MCF 10A (cell line): ENCODE measurements at regions of chr5 and their contacts with region 1.

Region 1: DNA sequence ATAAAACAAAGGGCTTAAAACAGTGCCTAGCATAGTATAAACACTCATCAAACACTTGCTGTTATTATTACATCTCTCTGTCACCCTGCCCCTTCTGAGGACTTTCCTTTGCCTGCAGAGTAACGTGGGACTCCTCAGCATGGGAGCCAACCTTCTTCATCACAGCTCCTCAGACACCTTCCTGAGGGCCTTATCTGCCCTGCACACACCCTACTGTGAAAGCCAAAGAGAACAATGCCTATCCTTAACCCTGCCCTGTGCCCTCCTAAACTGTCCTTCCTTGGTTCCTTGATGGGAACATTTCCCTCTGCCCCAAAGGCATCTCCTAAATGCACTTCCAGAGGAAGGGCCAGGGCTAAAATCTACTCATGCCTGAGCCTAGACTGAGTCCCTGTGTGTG is 20.6 kb upstream of the HAND1 start:
- DNase-seq: no peak
- H3K4me3 Mint-ChIP-seq: no peak overlapping the region
- H3K27ac Mint-ChIP-seq: no peak overlapping the region
- H3K4me1 Mint-ChIP-seq: no peaks in the 10 kb centered on the region
- H3K27me3 Mint-ChIP-seq: peaks cover 46% of the 10 kb centered on the region
- CTCF ChIP-seq: no peak

Region 2: DNA sequence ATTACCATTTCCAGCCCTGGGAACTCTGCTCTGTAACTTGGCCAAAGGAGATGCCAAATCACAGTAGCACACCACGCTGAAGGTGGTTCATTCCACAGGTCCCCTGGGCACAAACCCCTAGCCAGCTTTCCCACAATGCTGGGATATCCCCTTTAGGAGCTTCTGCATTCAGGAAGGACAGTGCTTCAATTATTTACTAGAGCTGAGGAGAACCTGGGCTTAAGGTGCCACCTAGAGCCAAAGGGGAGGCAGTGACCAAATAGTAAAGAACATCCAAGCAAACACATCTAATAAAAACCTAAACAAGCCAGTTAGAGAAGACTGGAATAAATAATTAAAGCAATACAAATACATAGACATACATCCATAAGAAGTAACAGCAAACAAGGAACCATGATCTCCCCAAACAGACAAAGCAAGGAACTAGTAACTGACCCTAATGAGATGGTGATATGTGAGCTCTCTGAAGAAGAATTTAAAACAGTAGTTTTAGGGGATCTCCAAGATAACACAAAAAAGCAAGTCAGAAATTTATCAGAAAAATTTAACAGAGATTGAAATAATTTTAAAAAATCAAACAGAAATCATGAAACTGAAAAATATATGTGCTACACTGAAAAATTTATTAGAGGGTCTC is 529.5 kb after region 1 on chr5:
- CTCF ChIA-PET with region 1: no interaction called
- POLR2A ChIA-PET with region 1: no interaction called
- intact Hi-C with region 1: loop called (anchors 5 kb)
- DNase-seq: peak; percentile 58
- H3K4me3 Mint-ChIP-seq: no peak overlapping the region
- H3K27ac Mint-ChIP-seq: no peak overlapping the region
- H3K4me1 Mint-ChIP-seq: no peaks in the 10 kb centered on the region
- H3K27me3 Mint-ChIP-seq: no peaks in the 10 kb centered on the region
- CTCF ChIP-seq: peak; percentile 67